ENCODE measurements at regions of chr1 and their contacts with region 1.

Region 1: DNA sequence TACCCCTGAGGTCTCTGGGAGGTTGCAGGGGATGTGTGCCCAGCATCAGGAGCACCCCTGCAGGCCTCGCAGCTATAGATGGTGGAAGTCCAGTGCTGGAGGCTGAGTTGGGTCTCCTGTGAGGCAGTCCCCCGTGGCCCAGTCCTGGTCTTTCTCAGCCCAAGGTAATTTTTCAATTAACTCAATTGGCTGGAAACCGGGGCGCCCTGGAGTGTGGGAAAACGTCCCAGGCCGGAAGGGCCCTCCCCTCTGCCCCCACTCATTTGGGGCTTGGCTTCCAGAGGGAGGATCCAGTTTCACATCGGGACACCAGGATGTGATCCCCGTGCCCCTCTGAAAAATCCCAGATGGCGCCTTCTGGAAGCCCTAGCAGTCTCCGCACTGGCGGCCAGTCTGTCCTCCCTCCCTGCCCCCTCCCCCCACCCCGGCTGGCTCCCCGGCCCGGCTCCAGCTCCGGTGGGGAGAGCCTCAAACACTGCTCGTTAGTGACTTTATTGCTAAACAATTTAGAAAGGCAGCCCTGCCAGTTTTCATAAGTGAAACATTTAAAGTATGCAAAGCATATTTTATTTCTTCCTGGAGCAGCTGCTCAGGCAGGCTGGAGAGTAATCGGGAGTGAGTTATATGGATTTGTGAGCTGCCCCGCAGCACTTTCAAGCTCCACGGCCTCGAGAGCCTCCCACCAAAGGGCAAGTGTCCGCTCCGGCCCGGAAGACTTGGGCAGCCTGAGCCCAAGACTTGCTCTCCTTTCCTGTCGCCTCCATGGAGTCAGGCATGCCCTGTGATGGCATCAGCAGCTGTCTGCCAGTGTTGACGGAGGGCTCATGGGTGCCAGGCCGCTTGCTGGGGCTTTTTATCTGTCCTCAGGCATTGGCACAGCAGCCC is 208.2 kb upstream of the TMEM51 start:
- DNase-seq: peak in 1 of 2 donors; percentile 80
- H3K4me3 ChIP-seq: peak overlapping the region; percentile 2 to 60 (median 35)
- H3K27ac ChIP-seq: peak overlapping the region; percentile 96 to 97
- H3K4me1 ChIP-seq: peaks cover 19 to 26% of the 10 kb centered on the region in 2 donors
- H3K27me3 ChIP-seq: no peaks in the 10 kb centered on the region
- CTCF ChIP-seq: no peak
- POLR2A ChIP-seq: no peak

Region 2: DNA sequence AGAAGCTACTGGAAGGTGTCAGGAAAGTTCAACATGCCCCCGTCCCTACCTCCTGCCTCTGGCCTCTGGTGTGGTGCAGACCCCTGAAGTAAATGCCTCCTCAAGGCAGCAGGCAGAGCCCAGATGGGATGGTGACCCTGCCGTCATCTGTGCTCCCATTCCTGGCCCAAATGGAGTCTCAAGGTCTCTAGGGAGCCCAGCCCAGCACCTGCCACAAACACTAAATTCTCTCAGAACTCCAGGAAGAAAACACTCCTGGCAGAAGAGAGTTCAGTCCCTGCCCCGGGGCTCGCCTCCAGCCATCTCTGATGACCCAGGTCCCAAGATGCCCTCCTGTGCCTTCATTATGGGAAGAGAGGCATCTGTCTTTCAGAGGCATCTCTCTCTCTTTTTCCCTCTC is 53.4 kb before region 1 on chr1:
- intact Hi-C with region 1: loop called (anchors 2 kb)
- DNase-seq: no peak
- H3K4me3 ChIP-seq: no peak overlapping the region
- H3K27ac ChIP-seq: no peak overlapping the region
- H3K4me1 ChIP-seq: peaks cover 0 to 6% of the 10 kb centered on the region in 2 donors
- H3K27me3 ChIP-seq: no peaks in the 10 kb centered on the region
- CTCF ChIP-seq: no peak
- POLR2A ChIP-seq: no peak